ENCODE measurements at regions of chr20 and their contacts with region 1.

Region 1: GRCh38 chr20:5126512-5127203 is at the start of gene CDS2:
- DNase-seq: peak; percentile 99 to 100 (median 100)

Region 2: DNA sequence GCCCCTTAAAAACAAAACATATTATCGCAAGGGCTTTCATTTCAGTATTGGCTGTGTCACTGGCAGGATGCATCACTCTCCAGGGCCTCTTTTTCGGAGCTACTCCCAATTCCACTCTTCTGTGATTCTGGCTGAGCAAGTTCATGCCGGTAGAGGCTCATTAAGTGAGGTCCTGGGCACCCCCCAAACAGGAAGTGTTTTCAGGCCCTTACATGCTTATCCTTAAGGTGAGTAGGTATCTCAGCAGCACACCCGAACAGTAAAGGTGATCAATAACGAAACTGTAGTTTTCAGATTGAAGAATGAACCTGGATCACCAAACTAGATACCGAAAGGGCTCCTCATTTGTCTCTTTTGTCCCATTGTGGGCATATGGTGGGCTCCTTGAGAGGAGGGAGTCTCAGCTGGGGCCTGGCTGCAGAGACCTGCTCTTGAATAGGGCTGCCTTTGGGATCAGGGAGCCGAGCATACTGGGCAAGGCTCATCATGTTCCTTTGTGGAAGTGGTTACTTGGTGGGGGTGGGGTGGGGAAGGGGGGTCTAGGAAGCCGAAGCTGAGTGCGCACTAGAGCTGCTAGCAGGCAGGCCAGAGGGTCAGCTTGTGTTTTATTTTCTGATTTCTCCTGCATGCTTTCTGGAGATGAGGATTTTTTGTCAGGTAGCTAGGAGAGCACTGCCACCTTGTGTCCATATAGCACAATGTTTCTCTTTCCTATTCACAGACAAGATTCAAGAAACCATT is 65.3 kb after region 1 on chr20:
- intact Hi-C with region 1: loop called (anchors 1 kb)
- DNase-seq: peak in 28 of 42 donors; percentile 19 to 82 (median 59)